ENCODE measurements at regions of chr6 and their contacts with region 1.

Region 1: DNA sequence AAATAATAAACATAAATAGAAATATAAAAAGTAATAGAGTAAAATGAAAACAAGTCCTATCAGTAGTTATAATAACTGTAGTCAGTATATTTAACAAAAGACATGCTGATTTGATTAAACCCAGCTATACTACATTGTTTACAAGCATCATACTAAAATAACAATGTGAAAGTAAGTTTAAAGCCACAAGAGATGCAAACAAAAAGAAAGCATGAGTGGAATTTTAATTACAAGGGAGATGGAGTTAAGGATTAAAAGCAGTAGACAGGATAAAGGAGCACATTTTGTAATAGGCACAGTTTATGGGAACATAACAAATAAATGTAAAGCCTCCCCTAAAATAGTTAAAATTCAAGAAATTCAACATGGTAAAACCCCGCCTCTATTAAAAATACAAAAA is 41.5 kb downstream of the SENP6 start:
- DNase-seq: peak; percentile 40
- ATAC-seq: peak; percentile 51
- H3K4me3 ChIP-seq: no peak overlapping the region
- H3K27ac ChIP-seq: no peak overlapping the region
- H3K4me1 ChIP-seq: no peaks in the 10 kb centered on the region; the same call in 1 of the 2 replicates
- H3K27me3 ChIP-seq: no peaks in the 10 kb centered on the region
- CTCF ChIP-seq: no peak
- POLR2A ChIP-seq: no peak
- RAD21 ChIP-seq: no peak

Region 2: DNA sequence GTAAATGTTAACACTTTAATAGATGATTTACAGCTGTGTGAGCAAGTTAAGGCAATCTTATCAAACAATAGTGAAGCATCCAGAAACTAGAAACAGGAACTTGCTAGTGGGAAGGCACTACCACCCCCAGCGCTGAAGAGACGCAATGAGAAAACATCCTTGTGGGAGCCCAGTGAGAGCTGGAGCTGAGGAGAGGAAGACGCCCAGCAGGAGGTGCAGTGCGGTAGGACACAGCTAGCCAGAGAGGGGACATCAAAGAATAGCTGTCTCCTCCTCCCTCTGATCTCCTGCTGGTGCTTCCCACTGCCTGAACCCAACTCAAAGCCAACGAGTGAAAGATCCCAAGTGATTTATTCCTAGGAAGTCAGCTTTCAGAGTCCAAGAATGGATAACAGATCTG is 577.6 kb before region 1 on chr6:
- CTCF ChIA-PET with region 1: no interaction called
- POLR2A ChIA-PET with region 1: no interaction called
- dilution Hi-C with region 1: no loop called
- in situ Hi-C with region 1: no loop called
- intact Hi-C with region 1: no loop called
- DNase-seq: peak; percentile 25
- ATAC-seq: peak; percentile 64
- H3K4me3 ChIP-seq: no peak overlapping the region
- H3K27ac ChIP-seq: no peak overlapping the region
- H3K4me1 ChIP-seq: no peaks in the 10 kb centered on the region
- H3K27me3 ChIP-seq: no peaks in the 10 kb centered on the region
- CTCF ChIP-seq: 0 out of 2 replicates have a peak, but pooled peaks have one; percentile 12
- POLR2A ChIP-seq: no peak; the same call in 1 of the 2 replicates
- RAD21 ChIP-seq: no peak

Region 3: DNA sequence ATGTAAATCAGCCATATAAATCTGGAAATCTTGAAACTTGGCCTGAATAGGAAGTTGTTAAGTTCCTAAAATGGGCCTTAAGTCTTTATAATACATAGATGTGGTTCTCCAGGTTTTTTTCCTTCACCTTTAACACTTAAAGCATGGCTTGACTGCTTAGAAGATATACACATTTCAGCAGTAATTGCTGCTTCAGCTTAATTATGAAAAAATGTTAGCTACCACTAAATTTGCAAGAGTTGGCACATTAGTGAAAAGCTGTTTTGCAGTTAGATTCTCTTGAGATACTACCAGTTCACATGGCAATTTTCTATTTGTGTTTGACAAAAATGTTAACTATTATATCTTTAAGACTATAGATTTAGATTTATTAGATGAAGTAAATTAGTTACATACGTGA is 33.2 kb after region 1 on chr6:
- CTCF ChIA-PET with region 1: no interaction called
- POLR2A ChIA-PET with region 1: no interaction called
- dilution Hi-C with region 1: no loop called
- in situ Hi-C with region 1: no loop called
- intact Hi-C with region 1: loop called (anchors 5 kb)
- DNase-seq: no peak
- ATAC-seq: no peak
- H3K4me3 ChIP-seq: no peak overlapping the region
- H3K27ac ChIP-seq: no peak overlapping the region
- H3K4me1 ChIP-seq: no peaks in the 10 kb centered on the region
- H3K27me3 ChIP-seq: no peaks in the 10 kb centered on the region
- CTCF ChIP-seq: no peak
- POLR2A ChIP-seq: no peak
- RAD21 ChIP-seq: no peak